A673 (cell line): ENCODE measurements at regions of chr10 and their contacts with region 1.

Region 1: DNA sequence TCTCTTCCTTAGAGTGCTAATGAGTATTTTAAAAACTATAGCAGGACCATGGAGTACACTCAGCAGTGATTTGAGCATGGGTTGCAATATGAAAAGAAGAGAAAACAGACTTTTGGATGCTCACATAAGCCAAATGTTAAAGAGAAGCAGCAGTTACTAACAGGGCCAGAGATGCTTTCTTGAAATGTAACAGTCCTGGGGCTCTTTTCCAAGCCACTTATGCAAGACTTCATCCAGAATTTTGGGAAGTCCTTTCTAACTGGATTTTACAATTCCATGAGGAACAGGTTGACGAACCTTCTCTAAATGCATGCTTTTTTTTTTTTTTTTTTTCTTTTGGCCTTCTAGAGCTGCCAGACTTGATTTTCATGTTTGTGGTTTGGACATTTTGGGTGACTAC is 282.0 kb downstream of the SEC23IP start:
- DNase-seq: no peak
- H3K4me3 ChIP-seq: no peak overlapping the region
- H3K27ac ChIP-seq: no peak overlapping the region
- H3K4me1 ChIP-seq: no peaks in the 10 kb centered on the region
- H3K27me3 ChIP-seq: peaks cover 35% of the 10 kb centered on the region
- CTCF ChIP-seq: no peak

Region 2: DNA sequence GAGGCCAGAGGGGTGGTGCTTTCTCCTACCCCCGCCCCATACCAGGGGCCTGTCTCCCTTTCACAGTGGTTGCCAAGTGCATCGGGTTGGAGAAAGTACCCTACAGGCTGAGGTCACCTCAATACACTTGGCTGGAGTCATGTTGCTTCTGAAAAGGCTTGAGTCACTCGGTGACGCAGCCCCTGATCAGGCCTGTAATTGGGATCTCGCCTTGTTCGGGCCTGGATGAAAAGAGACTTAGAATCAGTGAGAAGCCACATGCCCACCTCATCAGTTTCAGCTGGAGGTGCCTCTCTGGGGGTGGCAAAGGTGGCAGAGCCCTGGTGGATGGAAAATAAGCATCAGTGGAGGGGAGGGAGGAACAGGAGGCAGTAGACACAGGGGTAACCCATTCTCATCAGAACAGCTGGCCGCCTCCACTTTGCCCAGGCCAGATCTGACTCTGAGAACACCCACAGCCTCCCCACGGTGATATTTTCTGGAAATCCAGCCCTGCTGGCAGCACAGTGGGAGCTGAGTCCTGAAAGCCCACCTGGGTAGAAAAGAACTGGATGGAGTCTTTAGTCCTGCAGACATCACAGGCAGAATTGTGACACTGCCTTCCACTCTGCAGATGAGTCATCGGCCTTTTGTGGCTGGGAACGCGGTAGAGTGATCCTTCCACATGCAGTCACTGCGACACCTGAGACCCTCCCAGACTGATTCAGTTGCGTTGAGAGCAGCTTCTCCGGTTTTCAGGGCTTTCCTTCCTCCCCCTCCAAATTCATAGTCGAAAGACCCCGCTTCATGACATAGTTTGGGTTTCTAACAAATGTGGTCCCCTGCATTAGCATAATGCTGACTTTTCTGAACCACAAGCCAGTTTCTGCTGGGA is 859.1 kb before region 1 on chr10:
- CTCF ChIA-PET with region 1: no interaction called
- POLR2A ChIA-PET with region 1: no interaction called
- intact Hi-C with region 1: no loop called
- DNase-seq: peak; percentile 80
- H3K4me3 ChIP-seq: no peak overlapping the region
- H3K27ac ChIP-seq: peak overlapping the region; percentile 85
- H3K4me1 ChIP-seq: peaks cover 55% of the 10 kb centered on the region
- H3K27me3 ChIP-seq: no peaks in the 10 kb centered on the region
- CTCF ChIP-seq: no peak

Region 3: DNA sequence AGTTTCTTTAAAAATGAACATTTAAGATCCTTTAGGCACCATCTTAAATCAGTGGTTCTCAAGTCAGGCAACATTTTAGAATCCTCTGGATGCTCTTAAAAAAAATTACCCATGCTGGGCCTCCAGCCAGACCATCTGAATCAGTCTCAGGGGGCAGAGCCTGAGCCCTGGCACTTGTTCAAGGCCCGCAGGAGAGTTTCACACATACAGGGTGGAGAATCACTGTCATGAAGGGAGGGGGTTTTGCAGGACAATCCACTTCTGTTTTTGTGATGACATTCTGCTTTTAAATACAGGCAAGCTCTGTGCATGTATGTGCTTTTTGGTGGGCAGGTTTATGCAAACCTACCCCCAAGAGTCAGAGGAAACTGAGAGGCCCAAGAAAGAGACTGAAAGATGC is 13.4 kb before region 1 on chr10:
- CTCF ChIA-PET with region 1: no interaction called
- POLR2A ChIA-PET with region 1: interaction called, 11 read pairs
- intact Hi-C with region 1: no loop called
- DNase-seq: no peak
- H3K4me3 ChIP-seq: no peak overlapping the region
- H3K27ac ChIP-seq: no peak overlapping the region
- H3K4me1 ChIP-seq: no peaks in the 10 kb centered on the region
- H3K27me3 ChIP-seq: peaks cover 33% of the 10 kb centered on the region
- CTCF ChIP-seq: no peak